ENCODE measurements at regions of chr4 and their contacts with region 1.

Region 1: DNA sequence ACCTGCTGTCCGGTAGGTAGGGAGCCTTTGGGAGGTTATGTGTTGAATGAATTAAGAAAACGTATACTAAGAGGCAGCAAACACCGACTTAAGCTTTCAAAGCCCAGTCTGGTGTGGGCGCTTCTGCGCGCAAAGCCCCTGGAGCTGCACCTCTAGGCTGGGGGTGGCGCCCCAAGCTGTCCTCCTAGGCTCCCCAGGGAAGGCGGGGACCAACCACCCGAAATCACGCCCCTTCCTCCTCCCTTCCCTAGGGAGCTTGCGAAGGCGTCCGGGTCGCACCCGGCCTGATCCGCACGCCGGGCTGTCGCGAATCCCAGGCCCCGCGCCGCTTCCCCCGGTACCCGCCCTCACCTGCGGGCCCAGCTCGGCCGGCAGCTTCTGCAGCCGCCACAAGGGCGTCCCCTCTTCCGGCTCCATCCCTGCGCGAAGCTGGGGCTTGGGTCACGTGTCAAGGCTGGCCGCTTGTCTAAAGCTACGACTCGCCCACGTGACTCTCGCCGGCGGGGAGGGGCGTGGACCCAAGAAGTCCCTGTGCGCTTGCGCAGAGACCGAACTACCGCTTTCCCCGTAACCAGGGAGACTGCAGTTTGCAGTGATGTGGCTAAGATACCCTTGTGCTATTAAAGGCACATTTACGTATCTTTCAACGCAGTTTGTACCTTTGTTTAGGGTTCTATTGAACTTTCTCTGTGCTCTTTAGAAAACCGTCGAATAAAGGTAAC is at the start of gene COMMD8:
- DNase-seq: peak; percentile 98
- H3K4me3 ChIP-seq: peak within 1 kb of the TSS; percentile 84
- H3K27ac ChIP-seq: peak within 1 kb of the TSS; percentile 76
- H3K4me1 ChIP-seq: no peaks in the 10 kb centered on the region
- H3K27me3 ChIP-seq: no peaks in the 10 kb centered on the region
- CTCF ChIP-seq: no peak
- total RNA-seq, gene COMMD8: 18.6 to 21.8 TPM

Region 2: DNA sequence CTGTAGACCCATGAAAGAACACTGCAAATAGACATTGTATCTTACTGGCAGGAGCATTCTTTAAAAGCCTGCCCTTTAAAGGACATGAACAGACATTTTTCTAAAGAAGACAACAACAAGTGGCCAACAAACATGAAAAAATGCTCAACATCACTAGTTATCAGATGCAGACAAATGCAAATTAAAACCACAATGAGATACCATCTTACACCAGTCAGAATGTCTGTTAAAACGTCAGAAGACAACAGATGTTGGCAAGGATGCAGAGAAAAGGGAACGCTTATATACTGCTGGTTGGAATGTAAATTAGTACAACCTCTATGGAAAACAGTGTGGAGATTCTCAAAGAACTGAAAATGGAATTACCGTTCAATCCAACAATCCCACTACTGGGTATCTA is 98.9 kb after region 1 on chr4:
- intact Hi-C with region 1: loop called (anchors 10 kb)
- DNase-seq: no peak
- H3K4me3 ChIP-seq: no peak overlapping the region
- H3K27ac ChIP-seq: no peak overlapping the region
- H3K4me1 ChIP-seq: no peaks in the 10 kb centered on the region
- H3K27me3 ChIP-seq: no peaks in the 10 kb centered on the region
- CTCF ChIP-seq: no peak

Region 3: GRCh38 chr4:47686294-47686872 is 223.0 kb after region 1 on chr4:
- intact Hi-C with region 1: no loop called
- DNase-seq: peak; percentile 59
- H3K4me3 ChIP-seq: no peak overlapping the region
- H3K27ac ChIP-seq: no peak overlapping the region
- H3K4me1 ChIP-seq: no peaks in the 10 kb centered on the region
- H3K27me3 ChIP-seq: no peaks in the 10 kb centered on the region
- CTCF ChIP-seq: peak; percentile 59